Ovary (tissue), 10 donors: ENCODE measurements at regions of chr22 and their contacts with region 1.

Region 1: DNA sequence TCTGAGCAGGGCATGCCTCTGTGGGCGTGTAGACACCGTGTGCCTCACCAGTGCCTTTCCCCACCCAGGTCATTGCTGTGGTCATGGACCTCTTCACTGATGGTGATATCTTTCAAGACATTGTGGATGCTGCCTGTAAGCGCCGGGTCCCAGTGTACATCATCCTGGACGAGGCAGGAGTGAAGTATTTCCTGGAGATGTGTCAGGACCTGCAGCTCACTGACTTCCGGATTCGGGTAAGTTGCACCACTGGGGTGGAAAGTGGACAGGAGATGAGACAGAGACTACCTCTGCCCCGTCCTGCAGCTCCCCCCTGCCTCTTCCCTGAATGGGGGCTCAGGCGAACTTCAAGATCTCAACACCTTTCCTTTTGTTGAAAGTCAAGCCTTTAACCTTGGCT is 24.3 kb downstream of the FAM83F start:
- DNase-seq: no peak
- H3K4me3 ChIP-seq: no peak overlapping the region
- H3K27ac ChIP-seq: no peak overlapping the region
- H3K4me1 ChIP-seq: no peaks in the 10 kb centered on the region
- H3K27me3 ChIP-seq: no peaks in the 10 kb centered on the region
- CTCF ChIP-seq: no peak
- EP300 ChIP-seq: no peak
- POLR2A ChIP-seq: no peak

Region 2: DNA sequence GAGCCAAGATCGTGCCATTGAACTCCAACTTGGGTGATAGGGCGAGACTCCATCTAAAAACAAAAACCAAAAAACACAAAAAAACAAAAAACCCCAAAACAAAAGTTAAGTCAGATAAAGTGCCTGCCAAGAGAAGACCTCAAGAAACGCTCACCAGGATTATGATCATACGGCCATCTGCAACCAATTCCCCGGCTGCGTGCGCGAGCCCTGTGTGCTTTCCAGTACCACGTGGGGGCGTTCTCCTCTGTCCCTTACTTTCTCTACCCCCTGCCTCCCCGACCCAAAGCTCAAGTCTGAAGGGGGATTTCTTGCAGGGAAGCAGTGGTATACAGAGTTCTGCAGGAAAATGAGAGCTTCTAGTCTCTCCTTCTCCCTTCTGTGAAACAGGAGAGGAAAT is 476.0 kb before region 1 on chr22:
- intact Hi-C with region 1: loop called (anchors 2 to 10 kb)
- DNase-seq: no peak
- H3K4me3 ChIP-seq: no peak overlapping the region
- H3K27ac ChIP-seq: no peak overlapping the region
- H3K4me1 ChIP-seq: no peaks in the 10 kb centered on the region
- H3K27me3 ChIP-seq: no peaks in the 10 kb centered on the region
- CTCF ChIP-seq: no peak
- EP300 ChIP-seq: no peak
- POLR2A ChIP-seq: no peak